HAP-1 (cell line): ENCODE measurements at regions of chr13 and their contacts with region 1.

Region 1: GRCh38 chr13:26051657-26052311 is at the start of gene SHISA2:
- DNase-seq: no peak
- H3K4me3 ChIP-seq: no peak within 1 kb of the TSS
- H3K4me1 ChIP-seq: peaks cover 17% of the 10 kb centered on the region
- H3K27me3 ChIP-seq: no peaks in the 10 kb centered on the region

Region 2: GRCh38 chr13:25192936-25193335 is 858.8 kb before region 1 on chr13:
- in situ Hi-C with region 1: no loop called
- DNase-seq: no peak
- H3K4me3 ChIP-seq: no peak overlapping the region
- H3K4me1 ChIP-seq: no peaks in the 10 kb centered on the region
- H3K27me3 ChIP-seq: no peaks in the 10 kb centered on the region

Region 3: DNA sequence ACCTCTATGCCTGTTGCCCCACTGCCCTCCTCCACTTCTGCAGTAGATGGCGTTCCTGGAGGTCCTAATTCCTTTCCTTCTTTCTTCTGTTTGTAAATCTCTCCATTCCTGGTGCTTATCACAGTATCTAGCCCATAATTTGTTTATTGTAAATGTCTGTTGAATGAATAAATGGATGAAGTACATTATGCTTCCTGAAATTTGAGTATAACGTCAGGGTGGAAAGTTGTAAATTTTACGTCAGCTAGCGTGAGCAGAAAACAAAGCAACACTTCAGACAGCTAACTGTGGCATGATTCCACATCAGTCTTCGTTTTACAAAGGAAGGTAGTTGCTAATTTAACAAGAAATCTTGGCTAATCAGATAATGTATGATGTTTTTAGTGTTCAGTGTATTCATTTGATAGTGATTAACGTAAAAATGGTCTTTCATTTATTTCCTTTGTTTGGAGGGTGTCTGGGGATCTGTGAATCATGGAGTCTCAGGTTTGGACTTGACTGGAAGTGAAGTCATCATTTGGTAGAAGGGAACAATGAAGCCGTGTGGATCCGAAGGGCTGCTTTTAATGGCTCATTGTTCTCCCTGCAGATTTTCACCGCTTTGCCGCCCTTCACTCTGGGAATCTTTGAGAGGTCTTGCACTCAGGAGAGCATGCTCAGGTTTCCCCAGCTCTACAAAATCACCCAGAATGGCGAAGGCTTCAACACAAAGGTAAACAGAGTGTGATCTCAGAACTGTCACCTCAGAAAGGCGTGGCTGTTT is 215.0 kb before region 1 on chr13:
- in situ Hi-C with region 1: loop called (anchors 10 kb)
- DNase-seq: peak; percentile 52 to 55
- H3K4me3 ChIP-seq: no peak overlapping the region
- H3K4me1 ChIP-seq: peaks cover 75% of the 10 kb centered on the region
- H3K27me3 ChIP-seq: no peaks in the 10 kb centered on the region